PC-3 (cell line): ENCODE measurements at regions of chr2 and their contacts with region 1.

Region 1: DNA sequence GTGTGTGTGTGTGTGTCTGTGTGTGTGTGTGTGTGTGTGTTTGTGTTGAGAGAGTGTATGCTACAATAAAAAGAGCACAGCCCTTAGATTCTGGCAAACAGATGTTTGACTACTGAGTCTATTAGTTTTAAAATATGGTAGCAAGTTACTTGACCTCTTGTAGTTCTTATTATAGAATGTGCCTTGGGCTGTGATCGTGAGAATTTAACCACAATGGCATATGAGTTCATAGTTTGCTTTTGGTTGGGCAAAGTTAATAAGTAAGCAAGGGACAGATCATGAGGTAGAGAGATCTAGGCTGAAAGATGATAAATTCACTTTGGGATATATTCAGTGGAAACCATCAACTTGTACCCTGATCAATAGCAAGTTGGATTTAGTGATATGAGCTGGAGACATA is 334.3 kb upstream of the VWC2L start:
- DNase-seq: peak; percentile 80
- ATAC-seq: peak; percentile 81
- H3K4me3 ChIP-seq: no peak overlapping the region
- H3K27ac ChIP-seq: peak overlapping the region; percentile 48
- H3K4me1 ChIP-seq: peaks cover 27% of the 10 kb centered on the region
- H3K27me3 ChIP-seq: no peaks in the 10 kb centered on the region
- CTCF ChIP-seq: no peak

Region 2: DNA sequence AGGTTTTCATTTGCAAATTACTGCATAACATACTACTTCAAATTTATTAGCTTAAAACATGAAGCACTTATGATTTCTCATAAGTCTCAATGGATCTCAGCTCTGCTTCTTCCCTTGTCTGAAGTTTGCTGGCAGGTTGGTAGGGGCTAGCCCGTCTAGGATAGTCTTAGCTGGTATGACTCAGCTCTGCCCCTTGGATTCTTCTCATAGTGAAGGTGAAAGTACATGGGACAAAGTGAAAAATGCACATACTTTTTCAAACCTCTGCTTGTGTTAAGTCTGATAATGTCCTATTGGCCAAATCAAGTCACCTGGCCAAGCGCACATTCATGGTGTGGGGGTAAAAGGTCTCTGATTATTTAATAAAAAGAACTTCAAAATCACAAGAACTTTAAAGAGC is 149.5 kb after region 1 on chr2:
- CTCF ChIA-PET with region 1: no interaction called
- POLR2A ChIA-PET with region 1: no interaction called
- intact Hi-C with region 1: no loop called
- DNase-seq: peak; percentile 4
- ATAC-seq: no peak
- H3K4me3 ChIP-seq: no peak overlapping the region
- H3K27ac ChIP-seq: no peak overlapping the region
- H3K4me1 ChIP-seq: no peaks in the 10 kb centered on the region
- H3K27me3 ChIP-seq: no peaks in the 10 kb centered on the region
- CTCF ChIP-seq: no peak

Region 3: DNA sequence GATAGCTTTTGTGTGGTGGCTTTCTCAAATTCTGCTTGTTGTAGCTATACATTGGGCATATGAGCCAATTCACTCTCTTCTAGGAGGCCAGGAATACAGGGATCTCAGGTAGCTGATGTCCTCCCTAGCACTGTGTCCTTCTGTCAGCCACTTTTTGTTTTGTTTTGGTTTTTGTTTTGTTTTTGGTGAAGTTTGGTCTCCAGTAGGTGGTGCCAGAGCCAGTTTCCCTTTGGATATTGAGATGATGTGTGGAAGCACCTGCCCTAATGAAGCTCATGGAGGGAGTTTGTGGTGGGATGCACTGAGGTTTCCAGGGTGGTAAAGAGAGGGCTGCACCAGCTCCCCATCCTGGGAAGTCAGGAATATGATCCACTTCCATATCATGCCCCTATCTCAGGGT is 233.8 kb after region 1 on chr2:
- CTCF ChIA-PET with region 1: no interaction called
- POLR2A ChIA-PET with region 1: no interaction called
- intact Hi-C with region 1: loop called (anchors 5 kb)
- DNase-seq: peak; percentile 33
- ATAC-seq: peak; percentile 10; the same call in 1 of the 2 replicates
- H3K4me3 ChIP-seq: no peak overlapping the region
- H3K27ac ChIP-seq: no peak overlapping the region
- H3K4me1 ChIP-seq: peaks cover 24% of the 10 kb centered on the region
- H3K27me3 ChIP-seq: no peaks in the 10 kb centered on the region
- CTCF ChIP-seq: peak; percentile 54

Region 4: DNA sequence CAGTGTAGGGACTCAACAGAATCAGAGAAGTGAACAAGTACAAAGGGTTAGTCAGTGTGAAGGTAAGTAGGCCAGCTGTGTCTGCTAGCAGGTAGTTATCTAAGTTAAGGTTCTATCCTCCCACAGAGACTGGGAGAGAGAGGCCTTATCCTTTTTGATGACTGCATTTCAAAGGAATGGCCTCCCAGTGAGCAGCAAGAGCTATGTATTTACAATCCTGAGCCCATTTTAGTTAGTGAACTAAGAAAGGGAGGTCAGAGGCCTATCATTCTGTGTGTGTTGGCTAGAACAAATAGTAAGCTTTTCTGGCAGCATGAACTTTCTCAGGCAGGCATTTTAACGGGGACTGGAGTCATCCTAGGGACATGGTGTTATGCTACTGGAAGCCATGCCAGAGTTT is 517.2 kb after region 1 on chr2:
- CTCF ChIA-PET with region 1: no interaction called
- POLR2A ChIA-PET with region 1: no interaction called
- intact Hi-C with region 1: loop called (anchors 5 kb)
- DNase-seq: peak; percentile 41
- ATAC-seq: peak; percentile 64
- H3K4me3 ChIP-seq: no peak overlapping the region
- H3K27ac ChIP-seq: no peak overlapping the region
- H3K4me1 ChIP-seq: no peaks in the 10 kb centered on the region
- H3K27me3 ChIP-seq: no peaks in the 10 kb centered on the region
- CTCF ChIP-seq: no peak

Region 5: GRCh38 chr2:214809751-214810564 is 733.4 kb after region 1 on chr2:
- CTCF ChIA-PET with region 1: no interaction called
- POLR2A ChIA-PET with region 1: no interaction called
- intact Hi-C with region 1: loop called (anchors 5 kb)
- DNase-seq: peak; percentile 97
- ATAC-seq: peak; percentile 89
- H3K4me3 ChIP-seq: peak overlapping the region; percentile 81
- H3K27ac ChIP-seq: 0 out of 2 replicates have a peak overlapping the region, but pooled peaks have one; percentile 1
- H3K4me1 ChIP-seq: peaks cover 28% of the 10 kb centered on the region
- H3K27me3 ChIP-seq: no peaks in the 10 kb centered on the region
- CTCF ChIP-seq: no peak